ENCODE measurements at regions of chr1 and their contacts with region 1.

Region 1: DNA sequence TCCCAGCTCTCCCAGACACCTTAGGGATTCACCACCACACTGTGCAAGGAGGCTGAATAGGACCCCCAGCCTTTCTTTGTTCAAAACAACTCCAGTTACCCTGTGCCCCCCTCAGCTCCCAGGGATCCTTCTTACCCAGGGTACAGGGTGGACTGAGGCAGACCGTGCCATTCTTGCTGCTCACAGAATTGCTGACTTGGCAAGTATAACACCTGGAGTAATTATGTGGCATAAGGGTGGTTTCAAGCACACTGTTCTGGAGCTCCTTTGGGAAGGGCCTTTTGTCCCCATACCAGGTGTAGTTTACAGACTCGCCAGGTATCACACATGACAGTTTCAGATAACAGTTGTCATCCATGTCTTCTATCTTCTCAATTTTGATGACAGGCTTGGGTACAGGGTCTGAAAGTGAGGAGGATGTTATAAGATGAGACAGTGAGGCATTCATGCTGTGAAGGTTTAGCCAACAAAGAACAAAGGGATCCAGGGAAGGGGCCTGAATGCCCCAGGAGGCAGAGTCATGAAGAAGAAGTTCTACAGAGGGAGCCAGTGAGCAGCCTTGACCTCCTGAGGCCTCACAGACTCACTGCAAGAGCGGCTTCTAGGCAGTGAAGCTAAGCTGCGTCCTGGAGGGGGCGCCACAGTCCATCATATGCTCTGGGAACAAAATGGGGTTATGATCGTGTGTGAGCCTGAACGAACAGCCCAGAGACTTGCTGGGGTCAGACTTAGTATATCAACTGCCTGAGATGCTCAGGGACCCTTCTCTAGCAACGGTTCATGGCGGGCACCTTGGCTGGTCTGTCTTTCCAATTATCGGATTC is 30.3 kb downstream of the CD48 start:
- DNase-seq: peak; percentile 93
- H3K4me3 Mint-ChIP-seq: no peak overlapping the region
- H3K27ac Mint-ChIP-seq: peak overlapping the region; percentile 96
- H3K4me1 Mint-ChIP-seq: peaks cover 74% of the 10 kb centered on the region
- H3K27me3 Mint-ChIP-seq: no peaks in the 10 kb centered on the region

Region 2: GRCh38 chr1:160618763-160619274 is 62.5 kb before region 1 on chr1:
- CTCF ChIA-PET with region 1: interaction called, 69 read pairs
- DNase-seq: peak; percentile 52
- H3K4me3 Mint-ChIP-seq: no peak overlapping the region
- H3K27ac Mint-ChIP-seq: peak overlapping the region; percentile 44
- H3K4me1 Mint-ChIP-seq: peaks cover 72% of the 10 kb centered on the region
- H3K27me3 Mint-ChIP-seq: no peaks in the 10 kb centered on the region

Region 3: DNA sequence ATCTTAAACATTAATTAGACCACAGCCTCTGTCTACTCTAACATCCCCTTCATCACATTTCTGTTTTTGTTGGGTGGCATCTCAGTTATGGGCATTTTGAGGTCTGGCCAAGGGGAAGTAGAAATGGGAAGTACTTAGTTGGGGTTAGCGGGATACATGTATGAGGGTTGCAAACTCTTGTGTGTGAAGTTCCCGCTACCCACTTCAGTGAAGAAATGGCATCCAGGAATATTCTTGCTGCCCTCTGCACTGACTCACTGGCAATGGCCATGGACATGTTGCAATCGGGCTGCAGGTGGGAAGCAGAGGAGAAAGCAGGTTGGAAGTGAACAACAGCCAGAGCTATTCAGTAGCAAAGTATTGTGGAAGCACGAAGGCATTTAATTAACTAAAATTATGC is 23.0 kb after region 1 on chr1:
- CTCF ChIA-PET with region 1: interaction called, 48 read pairs
- DNase-seq: no peak
- H3K4me3 Mint-ChIP-seq: peak overlapping the region; percentile 6
- H3K27ac Mint-ChIP-seq: peak overlapping the region; percentile 14
- H3K4me1 Mint-ChIP-seq: peaks cover 10% of the 10 kb centered on the region
- H3K27me3 Mint-ChIP-seq: no peaks in the 10 kb centered on the region

Region 4: GRCh38 chr1:160711602-160712311 is 30.5 kb after region 1 on chr1 and contains the start of gene CD48:
- CTCF ChIA-PET with region 1: interaction called, 48 read pairs
- DNase-seq: peak; percentile 71
- H3K4me3 Mint-ChIP-seq: no peak within 1 kb of the TSS
- H3K27ac Mint-ChIP-seq: no peak within 1 kb of the TSS
- H3K4me1 Mint-ChIP-seq: peaks cover 27% of the 10 kb centered on the region
- H3K27me3 Mint-ChIP-seq: no peaks in the 10 kb centered on the region

Region 5: GRCh38 chr1:160726498-160727315 is 45.4 kb after region 1 on chr1:
- CTCF ChIA-PET with region 1: interaction called, 107 read pairs
- DNase-seq: peak; percentile 75
- H3K4me3 Mint-ChIP-seq: no peak overlapping the region
- H3K27ac Mint-ChIP-seq: no peak overlapping the region
- H3K4me1 Mint-ChIP-seq: peaks cover 22% of the 10 kb centered on the region
- H3K27me3 Mint-ChIP-seq: no peaks in the 10 kb centered on the region

Region 6: DNA sequence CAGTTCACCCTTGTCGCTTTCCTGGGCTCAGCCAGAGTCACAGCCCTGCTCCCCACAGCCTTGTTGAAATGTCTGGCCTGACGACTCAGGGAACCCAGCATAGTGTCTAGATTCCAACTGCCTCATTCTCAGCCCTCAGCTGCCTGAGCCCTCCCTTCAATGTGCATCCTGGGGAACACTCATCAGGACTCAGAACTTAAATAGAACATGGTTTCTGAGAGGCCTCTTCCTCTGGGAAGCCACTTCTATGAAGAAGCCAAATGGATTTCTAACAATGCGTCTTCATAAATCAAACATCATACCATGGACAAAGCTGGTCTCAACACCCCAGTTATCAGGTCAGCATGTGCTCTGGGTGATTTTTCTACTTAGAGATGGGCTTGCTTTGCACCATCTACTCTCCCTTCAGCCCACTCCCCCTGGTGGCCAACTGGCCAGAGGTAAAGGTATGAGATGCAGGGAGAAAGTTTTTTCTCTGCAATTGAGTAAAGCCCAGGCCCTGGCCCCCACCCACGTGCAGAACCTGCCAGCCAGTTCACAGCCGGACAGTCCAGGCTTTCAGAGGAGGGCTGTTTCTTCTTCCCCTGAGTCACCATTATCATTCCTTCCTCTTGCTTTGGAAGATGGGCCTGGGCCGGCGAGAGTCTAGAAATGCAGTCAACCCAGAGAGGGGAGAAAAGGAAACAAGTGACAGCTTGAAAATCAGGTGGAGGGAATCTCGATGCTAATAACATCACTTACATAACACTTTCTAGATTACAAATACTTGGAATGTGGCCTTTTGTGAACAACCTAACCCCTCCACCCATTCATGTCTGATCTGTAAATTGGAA is 149.3 kb after region 1 on chr1:
- CTCF ChIA-PET with region 1: interaction called, 20 read pairs
- DNase-seq: peak; percentile 88
- H3K4me3 Mint-ChIP-seq: no peak overlapping the region
- H3K27ac Mint-ChIP-seq: no peak overlapping the region
- H3K4me1 Mint-ChIP-seq: peaks cover 26% of the 10 kb centered on the region
- H3K27me3 Mint-ChIP-seq: no peaks in the 10 kb centered on the region

Region 7: GRCh38 chr1:160951443-160952128 is 270.3 kb after region 1 on chr1:
- CTCF ChIA-PET with region 1: interaction called, 23 read pairs
- DNase-seq: peak; percentile 86
- H3K4me3 Mint-ChIP-seq: no peak overlapping the region
- H3K27ac Mint-ChIP-seq: no peak overlapping the region
- H3K4me1 Mint-ChIP-seq: peaks cover 13% of the 10 kb centered on the region
- H3K27me3 Mint-ChIP-seq: peaks cover 10% of the 10 kb centered on the region